Activated naive CD4-positive, alpha-beta T cell treated with anti-CD3 and anti-CD28 coated beads for 36 hours (primary cell): ENCODE measurements at regions of chr11 and their contacts with region 1.

Region 1: GRCh38 chr11:18669220-18669598 is 29.4 kb upstream of the TMEM86A start:
- DNase-seq: peak; percentile 23
- H3K4me3 Mint-ChIP-seq: no peak overlapping the region
- H3K27ac Mint-ChIP-seq: peak overlapping the region; percentile 63
- H3K4me1 Mint-ChIP-seq: peaks cover 70% of the 10 kb centered on the region
- H3K27me3 Mint-ChIP-seq: no peaks in the 10 kb centered on the region

Region 2: GRCh38 chr11:18383388-18384156 is 285.6 kb before region 1 on chr11:
- CTCF ChIA-PET with region 1: no interaction called
- intact Hi-C with region 1: loop called (anchors 5 kb)
- DNase-seq: peak; percentile 92
- H3K4me3 Mint-ChIP-seq: peak overlapping the region; percentile 42
- H3K27ac Mint-ChIP-seq: peak overlapping the region; percentile 89
- H3K4me1 Mint-ChIP-seq: peaks cover 34% of the 10 kb centered on the region
- H3K27me3 Mint-ChIP-seq: no peaks in the 10 kb centered on the region

Region 3: DNA sequence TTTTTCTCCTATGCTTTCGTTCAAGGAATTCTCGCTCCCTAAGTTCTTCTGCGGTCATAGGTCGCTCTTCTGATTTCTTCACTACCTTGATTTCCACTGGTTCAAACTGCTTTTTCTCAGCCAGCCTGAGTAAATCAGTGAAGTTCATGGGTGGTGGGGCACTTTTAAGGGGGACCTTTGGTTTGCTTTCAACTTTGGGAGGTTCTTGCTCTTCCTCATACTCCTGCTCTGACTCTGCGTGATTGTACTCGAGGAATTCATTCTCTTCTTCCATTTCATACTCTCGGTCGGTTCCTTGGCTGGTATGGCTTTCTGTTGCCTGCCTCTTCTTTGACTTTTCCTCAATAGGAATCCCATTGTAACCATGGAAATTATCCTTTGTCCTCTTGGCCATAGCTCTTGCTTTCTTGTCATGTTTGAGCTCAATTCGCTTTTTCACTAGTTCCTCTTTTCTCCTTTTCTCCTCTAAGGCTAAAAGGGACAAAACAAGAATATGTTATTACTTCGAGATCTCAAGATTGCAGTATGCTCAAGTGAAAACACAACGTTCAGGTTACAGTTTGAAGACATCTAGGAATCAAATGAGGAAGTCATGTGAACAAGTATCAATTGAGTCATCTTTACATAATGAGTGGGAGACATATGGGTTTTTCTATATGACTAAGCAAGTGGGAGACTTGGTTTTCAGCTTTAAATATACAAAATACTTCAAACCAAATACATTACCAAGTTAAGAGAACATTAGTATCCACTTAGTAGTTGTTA is 53.4 kb before region 1 on chr11:
- CTCF ChIA-PET with region 1: no interaction called
- intact Hi-C with region 1: loop called (anchors 1 kb)
- DNase-seq: no peak
- H3K4me3 Mint-ChIP-seq: no peak overlapping the region
- H3K27ac Mint-ChIP-seq: peak overlapping the region; percentile 78
- H3K4me1 Mint-ChIP-seq: peaks cover 46% of the 10 kb centered on the region
- H3K27me3 Mint-ChIP-seq: no peaks in the 10 kb centered on the region

Region 4: DNA sequence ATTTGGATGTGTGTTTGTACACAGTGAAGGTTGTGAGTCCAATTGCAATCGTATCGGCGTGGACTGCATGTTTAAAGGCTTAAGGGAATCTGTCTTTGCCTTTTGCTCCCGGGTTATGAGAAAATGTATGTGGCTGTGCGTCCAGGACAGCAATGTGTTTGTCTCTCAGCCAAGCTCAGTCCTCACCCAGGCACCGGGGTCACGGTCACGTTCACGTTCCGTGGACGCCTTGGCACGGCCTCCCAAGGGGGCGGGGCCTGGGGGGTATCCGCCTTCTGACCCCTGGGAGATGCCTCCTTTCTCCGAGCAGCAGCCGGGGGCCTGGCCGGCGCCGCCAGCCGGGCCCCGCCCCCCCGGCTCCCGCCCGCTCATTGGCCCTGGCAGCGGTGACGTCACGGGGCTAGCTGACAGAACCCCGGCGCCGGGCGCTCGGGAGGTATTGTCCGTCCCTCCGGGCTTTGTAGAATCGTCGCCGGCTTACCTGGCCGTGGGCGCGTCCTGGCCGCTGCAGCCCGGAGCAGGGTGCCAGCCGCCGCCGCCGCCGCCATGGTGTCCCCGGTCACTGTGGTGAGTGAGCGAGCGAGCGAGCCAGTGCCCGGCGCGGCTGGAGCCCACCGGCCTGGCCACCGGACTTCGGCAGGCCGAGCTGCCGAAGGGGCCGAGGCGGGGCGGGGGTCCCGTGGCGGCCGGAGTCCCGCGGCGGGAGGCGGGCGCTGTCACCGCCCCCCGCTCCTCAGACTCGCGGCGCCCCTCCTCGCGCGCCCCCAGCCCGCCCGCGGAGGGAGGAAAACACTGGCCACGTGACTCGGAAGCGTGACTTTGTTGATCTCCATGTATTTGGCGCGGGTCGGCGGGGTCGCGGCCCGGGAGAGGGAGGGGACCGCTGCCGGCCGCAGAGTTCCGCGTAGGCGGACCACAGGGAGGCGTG is 29.4 kb after region 1 on chr11 and contains the start of gene TMEM86A:
- CTCF ChIA-PET with region 1: no interaction called
- intact Hi-C with region 1: loop called (anchors 1 kb)
- DNase-seq: peak; percentile 88
- H3K4me3 Mint-ChIP-seq: peak within 1 kb of the TSS; percentile 69
- H3K27ac Mint-ChIP-seq: no peak within 1 kb of the TSS
- H3K4me1 Mint-ChIP-seq: peaks cover 7% of the 10 kb centered on the region
- H3K27me3 Mint-ChIP-seq: peaks cover 3% of the 10 kb centered on the region
- total RNA-seq, gene TMEM86A: 0.05 to 0.15 TPM

Region 5: GRCh38 chr11:18706330-18707243 is 37.4 kb after region 1 on chr11:
- CTCF ChIA-PET with region 1: no interaction called
- intact Hi-C with region 1: loop called (anchors 2 kb)
- DNase-seq: peak; percentile 77
- H3K4me3 Mint-ChIP-seq: peak overlapping the region; percentile 71
- H3K27ac Mint-ChIP-seq: peak overlapping the region; percentile 69
- H3K4me1 Mint-ChIP-seq: peaks cover 23% of the 10 kb centered on the region
- H3K27me3 Mint-ChIP-seq: no peaks in the 10 kb centered on the region